Activated CD8-positive, alpha-beta memory T cell treated with anti-CD3 and anti-CD28 coated beads, Interleukin-2, amount 10 ng/mL, durations not matched to agents 7 days and 5 days (primary cell): ENCODE measurements at regions of chr12 and their contacts with region 1.

Region 1: GRCh38 chr12:94101738-94102660 is 46.4 kb upstream of the PLXNC1 start:
- DNase-seq: peak; percentile 91
- ATAC-seq: peak; percentile 84
- H3K4me3 Mint-ChIP-seq: peak overlapping the region; percentile 80
- H3K27ac Mint-ChIP-seq: peak overlapping the region; percentile 75
- H3K4me1 Mint-ChIP-seq: peaks cover 29% of the 10 kb centered on the region
- H3K27me3 Mint-ChIP-seq: peaks cover 46% of the 10 kb centered on the region

Region 2: DNA sequence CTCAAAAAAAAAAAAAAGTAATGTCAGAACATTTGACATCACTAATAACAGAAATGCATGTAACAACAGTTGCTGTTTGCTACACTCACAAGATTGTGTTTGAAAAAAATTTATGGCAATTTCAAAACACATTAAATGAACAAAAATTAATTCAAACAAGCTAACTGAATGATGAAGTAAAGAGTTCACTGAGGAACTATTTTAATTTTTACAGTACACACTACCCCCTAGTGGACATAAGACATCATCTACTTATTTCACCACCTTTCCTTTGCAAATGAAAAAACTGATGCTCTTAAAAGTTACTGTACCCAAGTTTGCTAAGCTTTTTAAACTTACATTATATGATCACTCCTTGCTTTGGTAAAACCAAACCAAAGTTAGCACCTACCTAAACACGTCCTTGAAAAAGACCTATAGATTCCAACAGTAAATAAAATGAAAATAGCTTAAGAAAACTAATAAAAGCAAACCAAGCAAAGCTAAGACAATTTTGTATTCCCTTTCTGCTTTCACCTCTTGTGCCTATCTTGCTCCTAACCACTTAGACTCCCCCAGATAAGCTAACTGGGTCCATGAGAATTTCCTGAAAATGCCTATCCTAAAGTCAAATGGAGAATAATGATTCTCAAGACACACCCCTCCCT is 682.5 kb before region 1 on chr12:
- CTCF ChIA-PET with region 1: interaction called, 11 read pairs
- DNase-seq: no peak
- ATAC-seq: peak; percentile 67
- H3K4me3 Mint-ChIP-seq: no peak overlapping the region
- H3K27ac Mint-ChIP-seq: no peak overlapping the region
- H3K4me1 Mint-ChIP-seq: peaks cover 77% of the 10 kb centered on the region
- H3K27me3 Mint-ChIP-seq: no peaks in the 10 kb centered on the region

Region 3: GRCh38 chr12:93526786-93527428 is 575.1 kb before region 1 on chr12:
- CTCF ChIA-PET with region 1: interaction called, 10 read pairs
- DNase-seq: no peak
- ATAC-seq: no peak
- H3K4me3 Mint-ChIP-seq: no peak overlapping the region
- H3K27ac Mint-ChIP-seq: no peak overlapping the region
- H3K4me1 Mint-ChIP-seq: peaks cover 4% of the 10 kb centered on the region
- H3K27me3 Mint-ChIP-seq: peaks cover 17% of the 10 kb centered on the region

Region 4: GRCh38 chr12:93759512-93760081 is 342.4 kb before region 1 on chr12:
- CTCF ChIA-PET with region 1: interaction called, 162 read pairs
- DNase-seq: no peak
- ATAC-seq: no peak
- H3K4me3 Mint-ChIP-seq: no peak overlapping the region
- H3K27ac Mint-ChIP-seq: peak overlapping the region; percentile 22
- H3K4me1 Mint-ChIP-seq: peaks cover 13% of the 10 kb centered on the region
- H3K27me3 Mint-ChIP-seq: no peaks in the 10 kb centered on the region

Region 5: GRCh38 chr12:93851257-93851671 is 250.7 kb before region 1 on chr12:
- CTCF ChIA-PET with region 1: interaction called, 15 read pairs
- DNase-seq: peak; percentile 90
- ATAC-seq: peak; percentile 70
- H3K4me3 Mint-ChIP-seq: peak overlapping the region; percentile 24
- H3K27ac Mint-ChIP-seq: peak overlapping the region; percentile 79
- H3K4me1 Mint-ChIP-seq: peaks cover 66% of the 10 kb centered on the region
- H3K27me3 Mint-ChIP-seq: peaks cover 15% of the 10 kb centered on the region

Region 6: GRCh38 chr12:94047741-94048567 is 54.0 kb before region 1 on chr12:
- CTCF ChIA-PET with region 1: no interaction called
- DNase-seq: no peak
- ATAC-seq: no peak
- H3K4me3 Mint-ChIP-seq: no peak overlapping the region
- H3K27ac Mint-ChIP-seq: no peak overlapping the region
- H3K4me1 Mint-ChIP-seq: no peaks in the 10 kb centered on the region
- H3K27me3 Mint-ChIP-seq: peaks cover 13% of the 10 kb centered on the region

Region 7: GRCh38 chr12:94074980-94075928 is 26.7 kb before region 1 on chr12:
- CTCF ChIA-PET with region 1: interaction called, 19 read pairs
- DNase-seq: no peak
- ATAC-seq: no peak
- H3K4me3 Mint-ChIP-seq: no peak overlapping the region
- H3K27ac Mint-ChIP-seq: no peak overlapping the region
- H3K4me1 Mint-ChIP-seq: peaks cover 7% of the 10 kb centered on the region
- H3K27me3 Mint-ChIP-seq: peaks cover 54% of the 10 kb centered on the region

Region 8: DNA sequence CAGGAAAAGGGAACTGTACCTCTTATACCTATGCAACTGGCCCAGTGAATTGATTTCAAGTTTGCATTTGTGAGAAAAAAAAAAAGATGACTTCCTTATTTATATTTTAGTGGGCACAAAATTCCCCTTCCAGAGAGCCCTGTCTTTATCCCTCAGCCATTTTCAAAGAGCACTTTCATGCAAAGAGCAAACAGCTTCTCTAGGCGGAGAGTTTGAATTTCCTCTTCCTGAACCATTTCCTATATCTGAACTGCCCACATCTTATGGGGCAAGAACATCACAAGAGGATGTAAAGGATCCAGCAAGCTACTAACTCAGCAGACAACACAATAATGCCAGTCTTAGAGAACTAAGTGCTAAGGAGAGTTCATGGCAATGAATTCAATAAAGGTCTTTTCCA is 24.1 kb after region 1 on chr12:
- CTCF ChIA-PET with region 1: interaction called, 22 read pairs
- DNase-seq: no peak
- ATAC-seq: no peak
- H3K4me3 Mint-ChIP-seq: no peak overlapping the region
- H3K27ac Mint-ChIP-seq: no peak overlapping the region
- H3K4me1 Mint-ChIP-seq: peaks cover 25% of the 10 kb centered on the region
- H3K27me3 Mint-ChIP-seq: peaks cover 21% of the 10 kb centered on the region